Heart left ventricle (tissue), 16 donors: ENCODE measurements at regions of chr20 and their contacts with region 1.

Region 1: GRCh38 chr20:63178889-63179686 is 36.8 kb downstream of the YTHDF1 start:
- DNase-seq: peak in 3 of 5 donors; percentile 33 to 42 (median 36)
- ATAC-seq: peak in 2 of 4 donors; percentile 22 to 62
- H3K4me3 ChIP-seq: peak overlapping the region in 10 of 12 donors; percentile 11 to 46 (median 32)
- H3K27ac ChIP-seq: no peak overlapping the region
- H3K4me1 ChIP-seq: peaks cover 0 to 41% (median 18%) of the 10 kb centered on the region in 12 donors
- H3K27me3 ChIP-seq: peaks cover 62 to 97% (median 77%) of the 10 kb centered on the region in 9 donors
- CTCF ChIP-seq: peak; percentile 25 to 69 (median 48)
- POLR2A ChIP-seq: no peak

Region 2: DNA sequence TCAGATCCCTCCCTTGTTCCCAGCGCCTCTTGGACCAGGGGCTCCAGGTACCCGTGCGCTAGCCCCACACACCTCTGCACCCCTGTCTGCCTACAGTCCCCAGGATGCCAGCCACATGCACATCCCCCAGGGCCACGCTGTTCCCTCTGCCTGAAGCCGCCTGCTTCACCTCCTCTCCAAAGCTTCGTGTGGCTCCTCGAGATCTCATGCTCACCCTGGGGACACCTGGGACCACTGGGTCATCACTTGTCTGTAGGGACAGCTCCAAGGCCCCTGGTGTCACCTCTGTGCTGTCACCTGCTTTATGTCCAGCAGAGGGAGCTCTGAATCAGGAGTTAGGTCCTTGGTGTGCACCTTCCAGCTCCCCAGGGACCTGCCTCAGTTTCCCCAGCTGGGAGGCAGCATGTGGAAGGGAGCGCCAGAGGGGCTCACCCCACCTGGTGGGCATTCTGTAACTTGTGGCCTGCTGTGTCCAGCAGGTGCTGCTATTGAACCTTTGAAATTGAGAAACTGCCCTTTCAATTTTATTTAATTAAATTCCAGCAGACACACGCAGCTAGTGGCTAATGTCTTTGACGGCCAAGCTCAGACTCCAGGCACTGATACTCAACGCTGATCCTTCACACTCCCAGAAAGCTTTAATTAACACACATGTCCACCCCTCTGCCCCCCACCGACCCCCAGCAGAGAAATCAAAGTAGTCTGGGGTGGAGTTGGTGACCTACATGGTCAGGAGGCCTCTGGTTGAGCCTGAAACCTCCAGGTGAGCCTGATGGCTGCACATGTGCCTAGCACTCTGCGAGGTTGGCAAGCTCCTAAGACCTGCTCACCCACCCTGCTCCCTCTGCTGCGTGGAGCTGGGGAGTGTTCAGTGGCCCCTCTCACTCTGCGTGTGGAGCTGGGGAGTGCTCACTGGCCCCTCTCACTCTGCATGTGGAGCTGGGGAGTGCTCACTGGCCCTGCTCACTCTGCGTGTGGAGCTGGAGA is 44.4 kb after region 1 on chr20:
- intact Hi-C with region 1: loop called in 1 of 10 experiments (anchors 5 kb)
- DNase-seq: no peak
- ATAC-seq: peak in 2 of 4 donors; percentile 27 to 49
- H3K4me3 ChIP-seq: no peak overlapping the region
- H3K27ac ChIP-seq: no peak overlapping the region
- H3K4me1 ChIP-seq: peaks cover 0 to 11% (median 4%) of the 10 kb centered on the region in 12 donors
- H3K27me3 ChIP-seq: peaks cover 0 to 7% (median 0%) of the 10 kb centered on the region in 9 donors
- CTCF ChIP-seq: peak; percentile 52 to 72 (median 58)
- POLR2A ChIP-seq: no peak